HepG2 (cell line): ENCODE measurements at regions of chr17 and their contacts with region 1.

Region 1: GRCh38 chr17:35808962-35809854 is at the start of gene TAF15:
- DNase-seq: peak; percentile 97
- ATAC-seq: peak; percentile 97
- H3K4me3 ChIP-seq: peak within 1 kb of the TSS; percentile 85 to 95 (median 91)
- H3K27ac ChIP-seq: peak within 1 kb of the TSS; percentile 91
- H3K4me1 ChIP-seq: peaks cover 63% of the 10 kb centered on the region
- H3K27me3 ChIP-seq: no peaks in the 10 kb centered on the region; a peak in 2 of 5 replicates
- CTCF ChIP-seq: peak; percentile 87
- EP300 ChIP-seq: no peak
- POLR2A ChIP-seq: peak; percentile 92 to 98
- RAD21 ChIP-seq: no peak; the same call in none of the 2 replicates
- total RNA-seq, gene TAF15: 26.5 and 49.9 TPM in 2 replicates

Region 2: DNA sequence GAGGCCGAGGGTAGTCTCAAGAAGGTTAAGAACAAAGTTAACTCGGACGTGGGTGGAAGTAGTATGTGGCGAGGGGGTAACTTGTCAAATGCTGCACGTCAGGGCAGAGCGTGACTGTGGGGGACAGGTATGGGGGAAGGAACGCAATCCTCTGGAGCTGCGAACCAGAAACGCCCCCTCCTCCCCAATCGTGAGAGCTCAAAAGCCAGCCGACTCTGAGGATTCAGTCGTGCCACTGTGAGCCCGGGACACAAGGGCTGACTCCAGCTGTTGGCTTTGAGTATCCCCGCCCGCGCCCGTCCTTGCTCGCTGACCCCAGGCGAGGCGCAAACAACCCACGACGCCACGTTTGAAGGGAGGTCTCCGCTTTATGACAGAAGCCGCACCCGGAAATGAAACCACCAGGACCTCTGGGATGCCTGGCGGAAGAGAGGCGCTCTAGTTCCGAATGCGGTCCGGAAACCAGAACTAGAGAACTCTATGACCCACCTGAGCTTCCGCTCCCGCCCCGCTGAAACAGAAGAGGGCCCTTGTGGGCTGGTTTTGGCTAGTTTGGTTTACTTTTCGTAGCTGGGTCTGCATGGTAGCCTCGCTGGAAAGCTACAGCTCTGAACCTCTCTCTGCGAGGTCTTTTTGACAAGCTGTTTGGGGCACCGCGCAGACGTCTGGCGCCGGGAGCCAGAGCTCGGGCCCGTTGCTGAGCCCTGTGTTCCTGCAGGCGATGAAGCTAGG is 230.8 kb before region 1 on chr17 and contains the start of gene PEX12:
- CTCF ChIA-PET with region 1: no interaction called
- POLR2A ChIA-PET with region 1: interaction called, 12 read pairs
- in situ Hi-C with region 1: no loop called
- intact Hi-C with region 1: no loop called
- DNase-seq: peak; percentile 92
- ATAC-seq: peak; percentile 98
- H3K4me3 ChIP-seq: peak within 1 kb of the TSS; percentile 84 to 89 (median 85)
- H3K27ac ChIP-seq: peak within 1 kb of the TSS; percentile 83
- H3K4me1 ChIP-seq: peaks cover 25% of the 10 kb centered on the region
- H3K27me3 ChIP-seq: no peaks in the 10 kb centered on the region; a peak in 1 of 5 replicates
- CTCF ChIP-seq: peak; percentile 50
- EP300 ChIP-seq: peak in 1 of 2 experiments; percentile 48; a peak in 1 of 4 replicates
- POLR2A ChIP-seq: peak; percentile 80 to 85
- RAD21 ChIP-seq: peak; percentile 24; the same call in 1 of the 2 replicates
- total RNA-seq, gene PEX12: 4.3 and 5.1 TPM in 2 replicates

Region 3: GRCh38 chr17:35713069-35713728 is 96.0 kb before region 1 on chr17:
- CTCF ChIA-PET with region 1: no interaction called
- POLR2A ChIA-PET with region 1: no interaction called
- in situ Hi-C with region 1: loop called (anchors 25 kb)
- intact Hi-C with region 1: no loop called
- DNase-seq: peak; percentile 87
- ATAC-seq: peak; percentile 95
- H3K4me3 ChIP-seq: no peak overlapping the region
- H3K27ac ChIP-seq: peak overlapping the region; percentile 61
- H3K4me1 ChIP-seq: peaks cover 16% of the 10 kb centered on the region
- H3K27me3 ChIP-seq: no peaks in the 10 kb centered on the region
- CTCF ChIP-seq: no peak
- EP300 ChIP-seq: peak in 1 of 2 experiments; percentile 53; a peak in 1 of 4 replicates
- POLR2A ChIP-seq: no peak
- RAD21 ChIP-seq: no peak

Region 4: DNA sequence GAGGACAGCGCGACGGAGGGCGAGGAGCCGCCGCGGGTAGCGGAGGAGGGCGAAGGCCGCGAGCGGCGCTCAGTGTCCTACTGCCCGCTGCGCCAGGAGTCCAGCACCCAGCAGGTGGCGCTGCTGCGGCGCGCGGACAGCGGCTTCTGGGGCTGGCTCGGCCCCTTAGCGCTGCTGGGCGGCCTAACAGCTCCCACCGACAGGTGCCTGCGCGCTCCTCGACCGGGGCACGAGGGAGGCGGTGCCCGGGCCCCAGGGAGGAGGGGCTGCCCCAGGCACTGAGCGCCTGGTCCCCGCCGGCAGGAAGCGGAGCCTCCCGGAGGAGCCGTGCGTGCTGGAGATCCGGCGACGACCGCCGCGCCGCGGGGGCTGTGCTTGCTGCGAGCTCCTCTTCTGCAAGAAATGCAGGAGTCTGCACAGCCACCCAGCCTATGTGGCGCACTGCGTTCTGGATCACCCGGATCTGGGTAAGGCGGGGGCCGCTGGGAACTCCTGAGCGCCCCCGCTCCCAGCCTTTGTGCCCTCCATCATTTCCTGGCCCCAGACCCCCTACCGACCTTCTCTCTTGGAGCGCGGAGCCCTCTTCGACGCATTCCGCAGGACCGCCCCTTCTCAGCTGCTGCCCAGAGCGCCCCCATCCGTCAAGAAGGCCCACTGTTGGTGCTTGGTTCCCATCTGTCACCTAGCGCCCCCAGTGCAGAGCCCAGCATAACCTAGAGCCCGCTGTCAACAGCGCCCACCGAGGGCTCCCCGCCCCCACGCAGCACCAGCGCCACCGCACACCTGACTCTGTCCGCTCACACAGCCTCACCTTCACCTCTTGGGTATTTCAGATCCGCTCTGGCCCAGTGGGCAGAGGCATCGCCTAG is 44.9 kb before region 1 on chr17:
- CTCF ChIA-PET with region 1: interaction called, 50 read pairs
- POLR2A ChIA-PET with region 1: interaction called, 60 read pairs
- in situ Hi-C with region 1: loop called (anchors 5 kb)
- intact Hi-C with region 1: loop called (anchors 1 kb)
- DNase-seq: peak; percentile 78
- ATAC-seq: peak; percentile 93
- H3K4me3 ChIP-seq: peak overlapping the region; percentile 26 to 76 (median 52); a peak in 5 of 6 replicates
- H3K27ac ChIP-seq: no peak overlapping the region
- H3K4me1 ChIP-seq: peaks cover 28% of the 10 kb centered on the region
- H3K27me3 ChIP-seq: peaks cover 3 to 33% of the 10 kb centered on the region in 2 experiments; a peak in 3 of 5 replicates
- CTCF ChIP-seq: peak; percentile 97
- EP300 ChIP-seq: no peak
- POLR2A ChIP-seq: no peak
- RAD21 ChIP-seq: peak; percentile 98

Region 5: GRCh38 chr17:35819456-35819855 is 10.2 kb after region 1 on chr17:
- CTCF ChIA-PET with region 1: no interaction called
- POLR2A ChIA-PET with region 1: interaction called, 39 read pairs
- in situ Hi-C with region 1: no loop called
- intact Hi-C with region 1: no loop called
- DNase-seq: no peak
- ATAC-seq: no peak
- H3K4me3 ChIP-seq: no peak overlapping the region
- H3K27ac ChIP-seq: no peak overlapping the region
- H3K4me1 ChIP-seq: peaks cover 40% of the 10 kb centered on the region
- H3K27me3 ChIP-seq: no peaks in the 10 kb centered on the region
- CTCF ChIP-seq: no peak
- EP300 ChIP-seq: no peak
- POLR2A ChIP-seq: no peak
- RAD21 ChIP-seq: no peak